Calu3 (cell line): ENCODE measurements at regions of chr1 and their contacts with region 1.

Region 1: GRCh38 chr1:17236779-17237560 is 11.9 kb upstream of the PADI3 start:
- DNase-seq: peak; percentile 89
- H3K4me3 Mint-ChIP-seq: no peak overlapping the region
- H3K27ac Mint-ChIP-seq: peak overlapping the region; percentile 8
- H3K4me1 Mint-ChIP-seq: peaks cover 51% of the 10 kb centered on the region
- H3K27me3 Mint-ChIP-seq: no peaks in the 10 kb centered on the region
- CTCF ChIP-seq: peak; percentile 80

Region 2: DNA sequence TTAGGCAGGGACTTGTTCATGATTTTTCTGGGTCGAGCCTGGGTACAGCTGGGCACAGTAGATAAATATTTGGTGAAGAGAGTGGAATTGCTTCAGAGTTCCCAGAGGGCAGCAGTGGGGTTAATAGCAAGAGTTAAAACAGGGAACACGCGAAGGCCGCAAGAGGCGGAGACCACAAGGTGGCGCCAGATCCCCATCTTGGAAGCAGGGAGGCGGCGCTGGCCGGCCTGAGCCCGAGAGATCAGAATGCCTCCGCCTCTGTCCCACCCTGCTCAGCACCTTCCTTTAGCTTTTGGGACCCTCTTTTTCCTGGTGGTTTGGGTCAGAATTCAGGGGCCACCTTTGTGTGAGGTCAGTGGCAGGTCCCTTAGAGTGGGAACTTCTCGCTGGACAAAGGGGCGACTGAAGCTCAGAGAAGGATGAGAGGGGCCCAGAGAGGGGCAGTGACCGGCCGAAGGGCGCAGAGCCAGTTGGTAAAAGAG is 111.2 kb before region 1 on chr1:
- CTCF ChIA-PET with region 1: interaction called, 14 read pairs
- intact Hi-C with region 1: loop called (anchors 1 kb)
- DNase-seq: peak; percentile 88
- H3K4me3 Mint-ChIP-seq: no peak overlapping the region
- H3K27ac Mint-ChIP-seq: no peak overlapping the region
- H3K4me1 Mint-ChIP-seq: no peaks in the 10 kb centered on the region
- H3K27me3 Mint-ChIP-seq: no peaks in the 10 kb centered on the region
- CTCF ChIP-seq: peak; percentile 95

Region 3: DNA sequence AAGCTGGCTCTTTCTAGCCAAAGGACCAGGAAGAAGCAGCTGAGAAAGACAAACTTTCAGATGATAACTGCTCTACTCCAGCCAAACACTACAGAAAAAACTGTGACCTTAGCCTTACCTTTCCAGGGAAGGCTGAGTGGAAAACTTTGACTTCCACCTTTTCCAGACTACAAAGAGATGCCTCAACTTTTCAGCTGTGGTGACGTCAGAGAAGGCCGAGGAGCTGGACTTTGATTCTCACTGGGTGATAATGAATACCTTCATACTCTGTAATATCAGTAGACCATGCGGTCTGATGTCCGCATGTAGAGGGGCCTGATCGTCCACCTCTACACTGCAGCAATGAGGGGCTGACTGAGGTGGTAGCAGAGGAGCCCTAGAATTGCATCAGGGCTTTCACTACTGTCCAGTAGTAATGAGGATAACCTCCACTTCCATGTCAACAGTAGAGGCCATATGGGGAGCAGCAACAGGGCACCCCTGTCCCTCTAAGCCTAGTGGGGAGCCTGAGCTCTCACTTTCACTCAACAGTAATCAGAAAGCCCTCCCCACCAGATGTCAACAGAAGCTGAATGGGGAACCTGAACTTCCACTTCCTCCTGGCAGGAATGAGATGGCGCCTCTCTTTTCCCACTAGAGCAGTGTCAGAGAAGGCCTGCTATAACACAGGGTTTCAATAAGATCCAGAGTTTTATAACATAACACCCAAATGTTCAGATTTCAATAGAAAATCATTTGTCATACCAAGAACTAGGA is 60.5 kb before region 1 on chr1:
- CTCF ChIA-PET with region 1: no interaction called
- intact Hi-C with region 1: no loop called
- DNase-seq: no peak
- H3K4me3 Mint-ChIP-seq: no peak overlapping the region
- H3K27ac Mint-ChIP-seq: no peak overlapping the region
- H3K4me1 Mint-ChIP-seq: peaks cover 30% of the 10 kb centered on the region
- H3K27me3 Mint-ChIP-seq: no peaks in the 10 kb centered on the region
- CTCF ChIP-seq: no peak

Region 4: DNA sequence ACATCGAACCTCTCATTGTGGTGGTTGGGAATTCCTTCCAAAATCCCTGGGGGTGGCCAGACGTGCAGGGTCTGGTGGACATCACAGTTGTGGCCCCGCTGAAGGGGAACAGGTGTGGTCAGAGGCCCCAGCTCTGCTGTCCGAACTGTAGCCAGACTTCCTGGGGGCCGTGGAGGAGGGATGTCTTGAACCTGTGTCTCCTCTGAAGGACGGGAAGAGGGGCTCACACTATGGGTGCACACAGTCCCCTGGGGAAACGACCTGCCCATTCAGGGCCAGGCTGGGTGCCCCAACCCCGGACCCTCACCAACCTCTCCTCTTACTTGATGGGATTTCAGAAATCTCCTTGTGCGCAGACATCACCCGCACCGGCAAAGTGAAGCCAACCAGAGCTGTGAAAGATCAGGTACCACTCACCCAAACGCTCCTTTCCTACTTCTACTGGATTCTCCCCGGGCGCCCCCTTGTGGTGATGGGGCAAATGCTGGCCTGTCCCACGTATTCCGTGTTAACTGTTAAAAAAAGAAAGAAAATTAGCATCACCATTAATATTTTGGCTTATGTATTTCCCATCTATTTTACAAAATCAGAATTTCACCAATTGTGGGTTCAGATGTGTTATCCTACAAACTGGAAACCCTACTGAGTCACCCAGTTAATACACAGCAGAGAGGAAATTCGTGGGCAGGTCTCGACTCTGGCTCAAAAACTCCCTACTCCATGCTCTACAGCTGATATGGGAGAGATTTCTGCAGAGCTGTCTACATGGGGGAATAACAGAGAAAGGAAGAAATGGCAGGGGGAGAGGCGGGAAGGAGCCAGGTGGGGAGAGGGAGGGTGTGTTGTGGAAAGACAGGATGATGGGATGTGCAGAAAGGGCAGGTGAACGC is 99.1 kb after region 1 on chr1:
- CTCF ChIA-PET with region 1: interaction called, 3 read pairs
- intact Hi-C with region 1: loop called (anchors 10 kb)
- DNase-seq: peak; percentile 88
- H3K4me3 Mint-ChIP-seq: no peak overlapping the region
- H3K27ac Mint-ChIP-seq: no peak overlapping the region
- H3K4me1 Mint-ChIP-seq: peaks cover 19% of the 10 kb centered on the region
- H3K27me3 Mint-ChIP-seq: peaks cover 58% of the 10 kb centered on the region
- CTCF ChIP-seq: peak; percentile 62

Region 5: GRCh38 chr1:17405898-17406759 is 169.2 kb after region 1 on chr1:
- CTCF ChIA-PET with region 1: no interaction called
- intact Hi-C with region 1: loop called (anchors 10 kb)
- DNase-seq: peak; percentile 72
- H3K4me3 Mint-ChIP-seq: no peak overlapping the region
- H3K27ac Mint-ChIP-seq: no peak overlapping the region
- H3K4me1 Mint-ChIP-seq: no peaks in the 10 kb centered on the region
- H3K27me3 Mint-ChIP-seq: no peaks in the 10 kb centered on the region
- CTCF ChIP-seq: peak; percentile 50

Region 6: DNA sequence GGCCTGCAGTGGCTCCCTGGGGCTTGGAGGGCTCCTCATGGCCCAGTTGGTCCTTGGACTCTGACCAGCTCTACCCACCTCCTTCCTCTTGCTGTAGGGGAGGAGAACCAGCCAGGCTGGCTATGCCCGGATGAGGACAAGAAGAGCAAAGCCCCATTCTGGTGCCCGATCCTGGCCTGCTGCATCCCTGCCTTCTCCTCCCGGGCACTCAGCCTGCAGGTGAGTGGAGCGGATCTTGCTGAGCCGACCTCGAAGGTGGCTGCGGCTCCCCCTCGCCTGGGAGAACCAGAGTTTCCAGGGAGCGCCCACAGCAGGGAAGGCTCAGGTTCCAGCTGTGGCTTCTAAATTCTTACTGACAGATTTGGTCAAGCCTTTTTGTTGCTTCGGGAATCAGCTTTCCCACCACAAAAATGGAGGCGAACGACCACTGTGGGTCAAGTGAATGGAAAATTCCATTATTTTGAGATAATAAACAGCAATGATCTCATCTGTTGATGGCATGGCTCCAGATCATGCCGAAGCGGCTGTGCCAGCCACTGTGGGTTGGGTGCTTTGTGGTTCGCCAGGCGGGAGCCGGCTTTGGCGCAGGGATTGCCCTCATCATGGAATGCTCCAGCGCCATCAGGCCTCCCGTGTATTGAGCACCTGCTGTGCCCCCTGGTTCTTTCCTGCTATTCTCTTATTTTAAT is 411.6 kb after region 1 on chr1:
- CTCF ChIA-PET with region 1: no interaction called
- intact Hi-C with region 1: no loop called
- DNase-seq: no peak
- H3K4me3 Mint-ChIP-seq: no peak overlapping the region
- H3K27ac Mint-ChIP-seq: no peak overlapping the region
- H3K4me1 Mint-ChIP-seq: no peaks in the 10 kb centered on the region
- H3K27me3 Mint-ChIP-seq: no peaks in the 10 kb centered on the region
- CTCF ChIP-seq: no peak